PC-3 (cell line): ENCODE measurements at regions of chr13 and their contacts with region 1.

Region 1: DNA sequence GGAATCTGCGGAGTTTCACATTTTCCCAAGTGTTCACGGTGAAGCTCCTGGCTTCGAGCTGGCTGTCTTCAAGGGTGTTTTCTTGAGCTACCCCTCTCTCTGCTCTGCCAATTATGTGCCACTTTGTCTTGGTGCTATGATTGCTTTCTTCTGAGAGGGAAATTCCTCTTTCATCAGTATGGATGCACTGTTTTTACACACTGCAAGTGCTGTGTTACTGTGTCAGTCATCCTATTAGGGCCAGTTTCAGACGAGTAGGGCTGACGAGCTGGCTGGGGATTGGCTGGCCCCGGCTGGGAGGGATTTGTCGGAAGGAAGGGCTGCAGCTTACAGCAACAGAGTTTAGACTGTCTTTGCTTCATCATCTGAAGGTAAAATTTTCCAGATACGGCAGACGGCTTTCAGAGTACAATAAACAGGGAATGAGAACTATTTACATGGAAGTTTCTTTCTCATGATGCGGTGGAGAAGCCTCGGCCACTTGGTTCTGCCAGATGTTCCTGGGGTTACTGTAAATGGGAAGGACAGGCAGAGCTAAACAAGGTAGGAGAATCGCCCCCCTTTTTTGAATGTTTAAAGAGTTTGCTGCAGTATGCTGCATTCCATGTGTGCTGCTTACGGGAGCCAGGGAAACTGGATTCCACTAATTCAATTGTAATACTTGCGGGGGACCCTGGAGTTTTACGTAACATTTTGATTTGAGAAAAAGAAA is at the start of gene MBNL2:
- DNase-seq: peak; percentile 87
- ATAC-seq: peak; percentile 95
- H3K4me3 ChIP-seq: peak within 1 kb of the TSS; percentile 92
- H3K27ac ChIP-seq: peak within 1 kb of the TSS; percentile 70
- H3K4me1 ChIP-seq: peaks cover 37% of the 10 kb centered on the region
- H3K27me3 ChIP-seq: no peaks in the 10 kb centered on the region
- CTCF ChIP-seq: no peak
- total RNA-seq, gene MBNL2: 10.3 and 17.8 TPM in 2 replicates

Region 2: DNA sequence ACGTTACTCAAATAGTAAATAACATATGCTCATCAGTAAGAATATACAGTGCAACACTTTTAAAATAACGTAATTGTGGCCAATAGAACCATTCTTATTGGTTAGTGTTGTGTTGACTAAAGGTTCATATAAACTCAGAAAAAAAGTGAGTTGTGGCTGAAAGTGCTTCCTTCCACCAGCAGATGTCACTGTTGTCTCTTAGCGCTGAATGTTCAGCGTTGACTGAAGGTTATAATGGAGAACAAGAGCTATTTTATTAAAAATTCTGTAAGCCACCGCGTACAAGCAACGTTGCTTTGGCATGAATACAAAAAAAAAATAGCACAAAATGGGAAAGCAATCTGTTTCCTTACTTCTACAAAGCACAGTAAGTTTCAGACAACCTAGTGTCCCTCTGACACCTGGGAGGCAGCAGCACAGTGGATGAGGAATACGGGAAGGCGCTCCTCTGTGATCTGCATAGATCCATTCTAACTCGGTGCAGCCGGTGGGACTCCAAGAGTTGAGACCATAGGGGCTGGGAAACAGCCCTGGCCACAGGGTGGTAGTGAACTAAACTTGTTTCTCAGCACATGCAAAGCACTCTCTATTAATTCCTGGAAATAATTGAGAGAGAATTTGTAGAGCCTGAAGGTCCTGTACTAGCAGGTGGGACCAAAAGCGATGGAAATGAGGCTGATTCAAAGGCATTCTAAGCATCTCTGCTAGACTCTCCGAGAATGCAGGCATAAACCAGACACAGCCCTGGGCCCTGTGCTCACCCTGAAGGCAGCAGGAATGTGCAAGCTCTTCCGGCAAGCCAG is 203.9 kb before region 1 on chr13:
- CTCF ChIA-PET with region 1: no interaction called
- POLR2A ChIA-PET with region 1: no interaction called
- intact Hi-C with region 1: loop called (anchors 5 kb)
- DNase-seq: peak; percentile 72
- ATAC-seq: peak; percentile 69
- H3K4me3 ChIP-seq: no peak overlapping the region
- H3K27ac ChIP-seq: no peak overlapping the region
- H3K4me1 ChIP-seq: no peaks in the 10 kb centered on the region
- H3K27me3 ChIP-seq: peaks cover 42% of the 10 kb centered on the region
- CTCF ChIP-seq: peak; percentile 84

Region 3: GRCh38 chr13:97076898-97077297 is 145.2 kb before region 1 on chr13:
- CTCF ChIA-PET with region 1: no interaction called
- POLR2A ChIA-PET with region 1: no interaction called
- intact Hi-C with region 1: no loop called
- DNase-seq: no peak
- ATAC-seq: no peak
- H3K4me3 ChIP-seq: no peak overlapping the region
- H3K27ac ChIP-seq: no peak overlapping the region
- H3K4me1 ChIP-seq: no peaks in the 10 kb centered on the region
- H3K27me3 ChIP-seq: peaks cover 8% of the 10 kb centered on the region; the same call in 1 of the 2 replicates
- CTCF ChIP-seq: no peak

Region 4: DNA sequence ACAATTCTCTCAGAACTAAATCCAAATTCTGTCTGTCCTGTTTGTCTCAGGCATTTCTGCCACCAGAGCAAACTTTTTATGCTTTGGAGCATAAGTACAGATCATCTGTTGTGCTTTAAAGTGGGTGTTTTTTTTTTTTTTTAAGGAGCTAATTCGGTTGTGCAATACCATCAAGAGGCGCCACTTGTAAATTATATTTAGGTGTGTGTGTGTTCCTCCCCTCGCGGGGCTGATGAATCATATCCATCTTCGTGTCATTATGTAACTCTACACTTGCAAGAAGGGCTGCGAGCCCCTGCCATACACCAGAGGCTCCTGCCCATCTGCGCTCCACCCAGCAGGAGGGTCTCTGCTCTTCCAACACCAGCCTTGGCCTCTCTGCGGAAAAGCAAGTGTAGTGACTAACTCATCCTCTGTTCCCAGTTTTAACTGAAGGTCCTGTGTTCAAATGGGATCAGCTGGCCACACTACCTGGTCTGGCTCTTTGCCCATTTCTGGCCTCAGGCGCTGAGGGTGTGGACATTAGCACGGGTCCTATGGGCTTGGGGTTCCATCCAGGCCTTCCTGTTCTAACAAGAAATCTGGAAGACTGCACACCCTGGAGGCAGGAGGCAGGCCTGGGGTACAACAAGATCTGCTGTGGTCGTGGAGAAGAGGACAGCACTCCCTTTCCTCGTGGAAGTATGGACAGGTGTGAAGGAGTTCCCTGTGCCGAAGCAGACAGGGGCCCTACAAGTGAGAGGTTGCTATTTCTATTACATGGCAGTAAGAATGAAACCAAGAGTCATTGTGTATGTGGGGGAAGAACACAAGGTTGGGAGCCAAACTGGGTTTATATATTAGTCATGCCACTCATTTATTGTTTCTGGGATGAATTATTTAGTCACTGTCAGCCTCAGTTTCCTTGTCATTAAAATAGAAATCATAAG is 96.1 kb before region 1 on chr13:
- CTCF ChIA-PET with region 1: interaction called, 3 read pairs
- POLR2A ChIA-PET with region 1: no interaction called
- intact Hi-C with region 1: loop called (anchors 1 kb)
- DNase-seq: peak; percentile 61
- ATAC-seq: peak; percentile 39
- H3K4me3 ChIP-seq: peak overlapping the region; percentile 35; the same call in 1 of the 2 replicates
- H3K27ac ChIP-seq: peak overlapping the region; percentile 81
- H3K4me1 ChIP-seq: peaks cover 51% of the 10 kb centered on the region
- H3K27me3 ChIP-seq: no peaks in the 10 kb centered on the region
- CTCF ChIP-seq: no peak

Region 5: DNA sequence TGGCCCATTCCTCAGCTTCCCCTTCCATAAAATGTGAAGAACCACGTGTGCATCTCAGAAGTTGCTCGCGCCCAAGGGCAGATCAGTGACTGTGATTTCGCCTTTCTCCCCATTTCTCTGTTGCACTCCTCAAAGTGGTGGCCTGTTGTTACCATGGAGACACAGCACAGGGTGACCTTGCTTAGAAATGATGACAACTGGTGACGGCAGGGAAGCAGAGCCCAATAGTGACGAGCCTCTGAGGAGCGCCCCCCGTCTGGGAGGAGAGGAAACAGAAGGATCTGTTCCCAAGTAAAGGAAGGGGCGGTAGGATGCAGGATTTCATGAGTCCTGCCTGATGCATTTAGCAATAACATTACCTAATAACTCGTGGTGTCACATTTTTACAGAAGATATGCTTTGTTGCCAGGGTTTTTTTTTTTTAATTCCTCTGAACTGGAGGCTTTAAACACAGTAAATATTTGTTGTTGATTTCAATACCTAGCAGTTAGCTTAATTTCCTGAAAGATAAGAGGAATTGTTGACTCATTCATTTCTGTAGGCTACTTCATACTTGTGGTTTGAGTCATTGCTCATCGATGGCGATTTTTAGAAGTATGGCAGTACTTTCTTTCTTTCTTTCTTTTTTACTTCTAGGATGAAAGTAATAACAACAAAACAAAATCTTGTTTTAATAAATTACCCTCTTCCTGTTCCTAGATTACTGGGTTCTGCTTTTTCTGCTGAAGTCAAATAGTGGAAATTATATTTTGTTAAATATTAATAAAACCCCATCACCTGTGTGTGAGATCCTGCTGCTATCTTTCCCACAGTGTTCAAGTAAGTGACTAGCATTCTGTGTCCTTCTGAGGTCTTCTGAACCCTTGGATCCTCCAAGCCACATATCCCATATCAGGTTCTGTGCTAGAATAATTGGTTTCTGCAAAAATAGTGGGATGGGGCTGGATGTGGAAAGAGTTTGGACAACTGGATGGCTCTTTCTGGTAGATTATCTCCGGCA is 36.0 kb after region 1 on chr13:
- CTCF ChIA-PET with region 1: no interaction called
- POLR2A ChIA-PET with region 1: interaction called, 14 read pairs
- intact Hi-C with region 1: loop called (anchors 1 kb)
- DNase-seq: peak; percentile 82
- ATAC-seq: peak; percentile 50
- H3K4me3 ChIP-seq: peak overlapping the region; percentile 28; the same call in 1 of the 2 replicates
- H3K27ac ChIP-seq: peak overlapping the region; percentile 93
- H3K4me1 ChIP-seq: peaks cover 67% of the 10 kb centered on the region
- H3K27me3 ChIP-seq: no peaks in the 10 kb centered on the region
- CTCF ChIP-seq: peak; percentile 39

Region 6: DNA sequence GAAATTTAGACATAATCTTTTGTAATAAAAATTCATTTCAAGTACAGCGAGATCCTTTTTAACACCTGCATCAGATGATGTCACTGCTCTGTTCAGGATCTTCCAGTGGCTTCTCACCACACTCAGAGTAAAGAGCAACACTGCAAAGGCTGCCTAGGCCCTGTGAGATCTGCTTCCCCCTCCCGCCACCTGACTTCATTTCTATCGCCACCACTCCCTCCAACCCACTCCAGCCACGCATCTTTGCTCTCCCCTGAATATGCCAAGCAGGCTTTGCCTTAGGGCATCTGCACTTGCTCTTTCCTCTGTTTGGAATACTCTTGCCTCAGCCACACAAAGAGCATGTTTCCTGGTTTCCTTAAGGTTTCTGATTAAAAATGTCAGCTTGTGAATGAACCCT is 58.3 kb after region 1 on chr13:
- CTCF ChIA-PET with region 1: no interaction called
- POLR2A ChIA-PET with region 1: no interaction called
- intact Hi-C with region 1: no loop called
- DNase-seq: no peak
- ATAC-seq: no peak; the same call in 1 of the 2 replicates
- H3K4me3 ChIP-seq: no peak overlapping the region
- H3K27ac ChIP-seq: 0 out of 2 replicates have a peak overlapping the region, but pooled peaks have one; percentile 5
- H3K4me1 ChIP-seq: peaks cover 35% of the 10 kb centered on the region
- H3K27me3 ChIP-seq: no peaks in the 10 kb centered on the region
- CTCF ChIP-seq: no peak

Region 7: GRCh38 chr13:97344265-97345175 is 122.4 kb after region 1 on chr13:
- CTCF ChIA-PET with region 1: interaction called, 7 read pairs
- POLR2A ChIA-PET with region 1: interaction called, 3 read pairs
- intact Hi-C with region 1: loop called (anchors 1 kb)
- DNase-seq: peak; percentile 68
- ATAC-seq: peak; percentile 89
- H3K4me3 ChIP-seq: no peak overlapping the region
- H3K27ac ChIP-seq: no peak overlapping the region
- H3K4me1 ChIP-seq: peaks cover 17% of the 10 kb centered on the region
- H3K27me3 ChIP-seq: no peaks in the 10 kb centered on the region
- CTCF ChIP-seq: peak; percentile 80

Region 8: DNA sequence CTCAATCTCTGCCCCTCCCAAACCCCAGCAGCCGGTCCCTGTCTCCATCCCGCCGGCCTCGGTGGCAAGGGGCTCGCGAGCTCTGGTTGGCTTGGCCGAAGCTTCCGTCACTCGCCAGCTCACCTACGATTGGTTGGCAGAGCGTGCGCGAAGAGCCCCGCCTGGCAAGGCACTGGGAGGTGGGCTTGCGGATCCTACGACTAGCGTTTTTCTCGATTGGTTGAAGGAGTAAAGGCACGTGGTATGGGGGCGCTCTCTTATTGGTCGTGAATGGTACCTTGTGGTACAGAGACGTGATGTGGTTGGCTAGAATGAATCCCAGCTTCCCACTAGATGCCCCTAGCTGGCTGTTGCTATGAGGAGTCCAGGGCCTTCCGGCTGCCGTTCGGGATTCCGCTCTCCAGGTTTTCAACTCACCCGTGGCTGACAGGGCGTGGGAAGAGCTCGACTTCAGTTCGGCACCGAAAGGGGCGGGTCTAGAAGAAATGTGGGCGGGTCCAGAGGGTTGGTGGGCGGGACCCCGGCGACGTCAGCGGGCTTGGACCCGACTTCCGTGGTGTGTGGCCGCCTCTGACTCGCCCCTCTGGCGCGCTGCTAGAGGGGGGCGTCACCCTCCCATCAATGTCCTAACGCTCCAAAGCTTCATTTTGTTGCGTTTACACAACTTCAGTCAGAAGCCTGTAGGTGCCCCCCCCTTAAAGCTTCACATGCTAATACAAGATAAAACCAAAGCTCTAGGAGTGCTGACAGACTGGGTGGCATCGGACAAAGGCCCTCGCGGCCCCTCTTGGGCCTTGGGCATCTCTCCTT is 211.0 kb after region 1 on chr13:
- CTCF ChIA-PET with region 1: no interaction called
- POLR2A ChIA-PET with region 1: interaction called, 14 read pairs
- intact Hi-C with region 1: loop called (anchors 5 kb)
- DNase-seq: peak; percentile 96
- ATAC-seq: peak; percentile 80
- H3K4me3 ChIP-seq: peak overlapping the region; percentile 99
- H3K27ac ChIP-seq: peak overlapping the region; percentile 94
- H3K4me1 ChIP-seq: peaks cover 9% of the 10 kb centered on the region
- H3K27me3 ChIP-seq: no peaks in the 10 kb centered on the region
- CTCF ChIP-seq: no peak